ENCODE measurements at regions of chr11 and their contacts with region 1.

Region 1: GRCh38 chr11:93747122-93747521 is 5.7 kb downstream of the C11orf54 start:
- DNase-seq: no peak
- H3K4me3 ChIP-seq: no peak overlapping the region
- H3K27ac ChIP-seq: no peak overlapping the region
- H3K4me1 ChIP-seq: no peaks in the 10 kb centered on the region
- H3K27me3 ChIP-seq: no peaks in the 10 kb centered on the region
- CTCF ChIP-seq: no peak

Region 2: GRCh38 chr11:93784152-93784934 is 37.2 kb after region 1 on chr11 and contains the start of gene MED17:
- intact Hi-C with region 1: loop called (anchors 5 kb)
- DNase-seq: peak; percentile 96
- H3K4me3 ChIP-seq: peak within 1 kb of the TSS; percentile 94
- H3K27ac ChIP-seq: peak within 1 kb of the TSS; percentile 95
- H3K4me1 ChIP-seq: peaks cover 19% of the 10 kb centered on the region
- H3K27me3 ChIP-seq: no peaks in the 10 kb centered on the region
- CTCF ChIP-seq: peak; percentile 26
- total RNA-seq, gene MED17: 23.9 to 30.9 TPM